OCI-LY7 (cell line): ENCODE measurements at regions of chr1 and their contacts with region 1.

Region 1: GRCh38 chr1:92310185-92310597 is 11.3 kb downstream of the RPAP2 start:
- DNase-seq: peak; percentile 43
- H3K4me3 ChIP-seq: no peak overlapping the region
- H3K27ac ChIP-seq: no peak overlapping the region
- H3K4me1 ChIP-seq: no peaks in the 10 kb centered on the region
- CTCF ChIP-seq: peak; percentile 86

Region 2: GRCh38 chr1:92291372-92291999 is 18.7 kb before region 1 on chr1:
- CTCF ChIA-PET with region 1: no interaction called
- POLR2A ChIA-PET with region 1: no interaction called
- intact Hi-C with region 1: no loop called
- DNase-seq: peak; percentile 50
- H3K4me3 ChIP-seq: no peak overlapping the region
- H3K27ac ChIP-seq: no peak overlapping the region
- H3K4me1 ChIP-seq: no peaks in the 10 kb centered on the region
- CTCF ChIP-seq: peak; percentile 88

Region 3: DNA sequence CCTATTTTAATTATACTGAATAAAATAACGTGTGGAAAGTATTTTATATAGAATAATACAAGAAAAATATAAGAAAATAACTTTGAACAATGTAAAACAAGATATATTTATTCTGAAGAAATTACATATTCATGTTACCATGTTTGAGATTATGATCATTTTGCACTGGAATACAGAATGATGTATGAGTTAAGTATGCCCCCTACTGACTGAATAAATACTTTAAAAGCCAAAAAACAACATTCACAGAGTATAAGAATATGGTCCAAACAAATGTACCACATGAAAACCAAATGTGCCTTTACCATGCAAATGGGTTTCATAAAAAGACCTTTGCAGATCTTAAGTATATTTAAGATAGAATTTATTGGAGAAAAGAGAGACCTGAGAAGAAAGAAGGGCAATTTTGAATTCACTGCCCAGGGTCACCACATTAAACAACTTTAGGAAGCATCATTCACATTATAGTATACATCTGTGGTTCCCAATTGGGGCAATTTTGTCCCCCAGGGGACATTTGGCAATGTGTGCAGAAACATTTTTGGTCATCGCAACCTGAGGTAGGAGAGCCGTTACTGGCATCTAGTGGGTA is 313.1 kb after region 1 on chr1:
- CTCF ChIA-PET with region 1: no interaction called
- POLR2A ChIA-PET with region 1: no interaction called
- intact Hi-C with region 1: loop called (anchors 2 kb)
- DNase-seq: peak; percentile 37
- H3K4me3 ChIP-seq: no peak overlapping the region
- H3K27ac ChIP-seq: no peak overlapping the region
- H3K4me1 ChIP-seq: no peaks in the 10 kb centered on the region
- CTCF ChIP-seq: peak; percentile 84

Region 4: GRCh38 chr1:92755541-92756461 is 445.6 kb after region 1 on chr1:
- CTCF ChIA-PET with region 1: no interaction called
- POLR2A ChIA-PET with region 1: no interaction called
- intact Hi-C with region 1: no loop called
- DNase-seq: no peak
- H3K4me3 ChIP-seq: no peak overlapping the region
- H3K27ac ChIP-seq: no peak overlapping the region
- H3K4me1 ChIP-seq: no peaks in the 10 kb centered on the region
- CTCF ChIP-seq: no peak